ENCODE measurements at regions of chr1 and their contacts with region 1.

Region 1: DNA sequence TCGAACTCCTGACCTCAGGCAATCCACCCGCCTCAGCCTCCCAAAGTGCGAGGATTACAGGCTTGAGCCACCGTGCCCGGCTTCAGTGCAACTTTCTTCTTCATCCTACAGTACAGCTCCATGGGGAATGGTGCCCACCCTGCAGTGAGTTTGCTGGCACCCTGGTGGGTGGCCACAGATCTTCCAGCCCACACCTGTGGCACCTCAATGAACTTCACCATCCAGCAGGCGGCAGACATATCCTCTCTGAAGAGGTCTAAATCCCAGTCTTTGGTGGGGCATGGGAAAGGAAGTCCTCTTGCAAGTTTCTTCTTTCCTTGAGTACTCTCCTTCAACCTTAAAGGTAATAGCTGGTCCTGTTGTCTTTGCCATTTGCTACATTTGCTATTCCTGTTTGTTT is 18.1 kb upstream of the ZBTB8A start:
- DNase-seq: no peak
- ATAC-seq: peak; percentile 14
- H3K4me3 ChIP-seq: peak overlapping the region; percentile 50; the same call in 1 of the 2 replicates
- H3K27ac ChIP-seq: no peak overlapping the region
- H3K4me1 ChIP-seq: peaks cover 9% of the 10 kb centered on the region
- H3K27me3 ChIP-seq: no peaks in the 10 kb centered on the region
- CTCF ChIP-seq: 0 out of 6 replicates have a peak, but pooled peaks of 1 of the 3 experiments have one; percentile 14
- EP300 ChIP-seq: no peak
- POLR2A ChIP-seq: no peak
- RAD21 ChIP-seq: 0 out of 2 replicates have a peak, but pooled peaks have one; percentile 29

Region 2: GRCh38 chr1:31912839-31913239 is 608.3 kb before region 1 on chr1:
- CTCF ChIA-PET with region 1: no interaction called
- POLR2A ChIA-PET with region 1: no interaction called
- RAD21 ChIA-PET with region 1: no interaction called
- SMC1A ChIA-PET with region 1: no interaction called
- in situ Hi-C with region 1: no loop called
- intact Hi-C with region 1: no loop called
- DNase-seq: peak; percentile 43
- ATAC-seq: peak; percentile 85
- H3K4me3 ChIP-seq: peak overlapping the region; percentile 23; the same call in 1 of the 2 replicates
- H3K27ac ChIP-seq: peak overlapping the region; percentile 54
- H3K4me1 ChIP-seq: peaks cover 29% of the 10 kb centered on the region
- H3K27me3 ChIP-seq: no peaks in the 10 kb centered on the region
- CTCF ChIP-seq: no peak
- EP300 ChIP-seq: peak; percentile 36 to 39; a peak in 2 of 4 replicates
- POLR2A ChIP-seq: no peak
- RAD21 ChIP-seq: no peak

Region 3: GRCh38 chr1:32361674-32362473 is 159.3 kb before region 1 on chr1:
- CTCF ChIA-PET with region 1: no interaction called
- POLR2A ChIA-PET with region 1: no interaction called
- RAD21 ChIA-PET with region 1: no interaction called
- SMC1A ChIA-PET with region 1: no interaction called
- in situ Hi-C with region 1: no loop called
- intact Hi-C with region 1: no loop called
- DNase-seq: no peak
- ATAC-seq: peak; percentile 37
- H3K4me3 ChIP-seq: no peak overlapping the region
- H3K27ac ChIP-seq: no peak overlapping the region
- H3K4me1 ChIP-seq: peaks cover 7% of the 10 kb centered on the region
- H3K27me3 ChIP-seq: no peaks in the 10 kb centered on the region
- CTCF ChIP-seq: peak in 1 of 3 experiments; percentile 13; a peak in 2 of 6 replicates
- EP300 ChIP-seq: no peak
- POLR2A ChIP-seq: peak; percentile 36; the same call in 1 of the 2 replicates
- RAD21 ChIP-seq: no peak

Region 4: GRCh38 chr1:32508751-32509140 is 12.4 kb before region 1 on chr1:
- CTCF ChIA-PET with region 1: interaction called, 15 read pairs
- POLR2A ChIA-PET with region 1: no interaction called
- RAD21 ChIA-PET with region 1: no interaction called
- SMC1A ChIA-PET with region 1: interaction called, 3 read pairs
- in situ Hi-C with region 1: no loop called
- intact Hi-C with region 1: no loop called
- DNase-seq: no peak
- ATAC-seq: no peak
- H3K4me3 ChIP-seq: no peak overlapping the region
- H3K27ac ChIP-seq: no peak overlapping the region
- H3K4me1 ChIP-seq: no peaks in the 10 kb centered on the region
- H3K27me3 ChIP-seq: no peaks in the 10 kb centered on the region
- CTCF ChIP-seq: no peak
- EP300 ChIP-seq: no peak
- POLR2A ChIP-seq: no peak
- RAD21 ChIP-seq: no peak

Region 5: DNA sequence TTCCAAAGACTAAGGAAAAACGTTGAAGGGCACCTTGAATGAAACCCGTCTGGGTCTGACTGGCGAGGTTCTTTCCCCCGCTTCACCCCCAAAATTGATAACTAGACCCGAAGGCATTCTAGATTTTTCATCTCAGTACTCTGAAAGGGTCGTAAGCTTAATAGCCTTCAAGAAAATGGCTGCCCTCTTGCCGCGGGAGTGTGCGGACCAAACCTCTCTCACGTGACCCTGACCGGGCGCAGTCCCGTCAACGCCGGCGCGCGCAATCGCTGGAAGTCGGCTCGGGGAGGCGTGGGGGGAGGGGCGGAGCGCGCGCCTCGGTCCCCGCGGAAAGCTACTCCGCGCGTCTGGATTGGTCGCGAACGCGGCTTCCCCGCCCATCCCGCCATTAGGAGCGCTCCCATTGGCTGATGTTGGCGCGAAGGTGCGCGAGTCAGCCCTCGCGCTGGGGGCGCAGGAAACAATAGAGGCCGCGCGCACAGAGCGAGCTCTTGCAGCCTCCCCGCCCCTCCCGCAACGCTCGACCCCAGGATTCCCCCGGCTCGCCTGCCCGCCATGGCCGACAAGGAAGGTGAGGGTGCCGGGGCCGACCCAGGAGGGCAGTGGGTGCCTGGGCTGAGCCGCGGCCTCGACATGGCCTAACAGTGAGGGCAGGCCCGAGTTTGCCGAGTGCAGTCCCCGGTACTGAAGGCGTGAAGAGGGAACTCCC is 129.7 kb after region 1 on chr1 and contains the start of gene RBBP4:
- CTCF ChIA-PET with region 1: interaction called, 10 read pairs
- POLR2A ChIA-PET with region 1: no interaction called
- RAD21 ChIA-PET with region 1: interaction called, 3 read pairs
- SMC1A ChIA-PET with region 1: interaction called, 10 read pairs
- in situ Hi-C with region 1: no loop called
- intact Hi-C with region 1: loop called (anchors 5 kb)
- DNase-seq: peak; percentile 91
- ATAC-seq: peak; percentile 92
- H3K4me3 ChIP-seq: peak within 1 kb of the TSS; percentile 89
- H3K27ac ChIP-seq: peak within 1 kb of the TSS; percentile 100
- H3K4me1 ChIP-seq: peaks cover 3% of the 10 kb centered on the region; the same call in 1 of the 2 replicates
- H3K27me3 ChIP-seq: no peaks in the 10 kb centered on the region
- CTCF ChIP-seq: no peak
- EP300 ChIP-seq: peak in 1 of 2 experiments; percentile 28; a peak in 1 of 4 replicates
- POLR2A ChIP-seq: peak; percentile 96
- RAD21 ChIP-seq: no peak
- polyA plus RNA-seq, gene RBBP4: 120 to 234 TPM

Region 6: GRCh38 chr1:32709476-32709875 is 188.3 kb after region 1 on chr1:
- CTCF ChIA-PET with region 1: interaction called, 39 read pairs
- POLR2A ChIA-PET with region 1: no interaction called
- RAD21 ChIA-PET with region 1: interaction called, 13 read pairs
- SMC1A ChIA-PET with region 1: interaction called, 12 read pairs
- in situ Hi-C with region 1: no loop called
- intact Hi-C with region 1: loop called (anchors 5 kb)
- DNase-seq: no peak
- ATAC-seq: 0 out of 3 replicates have a peak, but pooled peaks have one; percentile 12
- H3K4me3 ChIP-seq: no peak overlapping the region
- H3K27ac ChIP-seq: no peak overlapping the region
- H3K4me1 ChIP-seq: no peaks in the 10 kb centered on the region
- H3K27me3 ChIP-seq: no peaks in the 10 kb centered on the region; a peak in 1 of 4 replicates
- CTCF ChIP-seq: no peak
- EP300 ChIP-seq: no peak
- POLR2A ChIP-seq: no peak
- RAD21 ChIP-seq: no peak

Measured in GM12878 (cell line).